ENCODE measurements at regions of chr12 and their contacts with region 1.

Region 1: DNA sequence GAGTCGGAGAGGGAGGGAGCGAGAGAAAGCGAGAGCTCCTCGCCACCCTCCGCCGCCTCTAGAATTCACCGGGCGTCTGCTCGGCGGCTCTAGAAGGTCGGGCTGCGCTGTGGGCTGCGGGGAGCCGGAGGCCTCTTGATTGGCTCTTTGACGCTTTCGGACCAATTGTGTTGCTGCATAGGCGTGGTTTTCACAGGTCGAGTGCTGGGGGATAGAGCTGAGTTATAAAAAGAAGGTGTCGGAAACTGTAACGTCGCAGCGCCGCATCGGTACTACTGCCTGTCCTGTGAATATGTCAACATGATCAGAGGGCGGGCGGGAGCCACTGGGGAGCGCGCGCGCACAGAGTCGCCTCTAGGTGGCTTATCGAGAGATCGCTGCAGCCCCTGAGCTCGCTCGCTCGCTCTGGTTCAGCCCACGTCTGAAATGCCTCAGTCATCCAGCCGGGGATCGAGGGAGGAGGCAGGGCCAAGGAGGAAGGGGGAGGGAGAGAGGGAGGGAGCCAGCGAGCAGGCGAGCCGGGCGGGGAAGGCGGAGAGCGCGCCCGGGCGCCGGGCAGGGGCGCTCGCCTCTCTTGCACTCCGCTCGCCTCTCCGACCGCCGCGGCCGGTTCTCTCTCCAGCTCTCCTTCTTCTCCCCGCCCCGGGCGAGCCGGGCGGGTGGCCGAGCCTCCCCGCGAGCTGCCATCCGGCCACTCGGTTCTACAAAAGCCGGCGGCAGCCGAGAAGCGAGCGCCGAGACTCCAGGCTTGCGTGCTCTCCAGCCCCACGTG is at the start of gene TBX3:
- DNase-seq: peak; percentile 98
- ATAC-seq: peak; percentile 92
- H3K4me3 ChIP-seq: peak within 1 kb of the TSS; percentile 81 to 97 (median 97)
- H3K27ac ChIP-seq: peak within 1 kb of the TSS; percentile 96
- H3K4me1 ChIP-seq: peaks cover 28% of the 10 kb centered on the region
- H3K27me3 ChIP-seq: no peaks in the 10 kb centered on the region; a peak in 1 of 5 replicates
- CTCF ChIP-seq: peak; percentile 91
- EP300 ChIP-seq: peak in 1 of 2 experiments; percentile 28; a peak in 2 of 4 replicates
- POLR2A ChIP-seq: peak; percentile 88 to 91
- RAD21 ChIP-seq: peak; percentile 86
- total RNA-seq, gene TBX3: 17.2 and 27.1 TPM in 2 replicates

Region 2: DNA sequence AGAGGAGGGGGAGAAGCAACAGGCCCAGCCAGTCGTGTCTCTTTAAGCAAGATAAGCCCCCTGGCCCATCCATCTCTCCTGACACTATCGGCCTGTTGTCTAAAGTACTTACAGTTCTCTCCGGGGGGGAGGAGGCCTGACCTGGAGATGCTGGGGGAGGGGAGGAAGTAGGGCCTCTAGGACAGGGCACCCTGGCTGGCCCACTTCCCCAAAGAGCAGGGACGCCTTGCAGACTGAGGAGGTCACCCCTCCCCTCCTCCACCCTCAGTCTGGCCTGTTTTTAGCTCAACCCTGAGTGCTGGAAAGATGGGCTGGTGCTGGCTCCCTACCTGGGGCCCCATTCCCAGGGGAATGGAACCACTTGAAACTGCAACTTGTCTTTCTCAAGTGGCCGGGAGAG is 348.7 kb before region 1 on chr12:
- CTCF ChIA-PET with region 1: no interaction called
- POLR2A ChIA-PET with region 1: no interaction called
- in situ Hi-C with region 1: no loop called
- intact Hi-C with region 1: no loop called
- DNase-seq: no peak
- ATAC-seq: no peak
- H3K4me3 ChIP-seq: no peak overlapping the region
- H3K27ac ChIP-seq: no peak overlapping the region
- H3K4me1 ChIP-seq: no peaks in the 10 kb centered on the region
- H3K27me3 ChIP-seq: 0 out of 5 replicates have a peak, but pooled peaks cover 0 to under 1% of the 10 kb centered on the region in 2 experiments
- CTCF ChIP-seq: no peak
- EP300 ChIP-seq: no peak
- POLR2A ChIP-seq: no peak
- RAD21 ChIP-seq: no peak

Region 3: DNA sequence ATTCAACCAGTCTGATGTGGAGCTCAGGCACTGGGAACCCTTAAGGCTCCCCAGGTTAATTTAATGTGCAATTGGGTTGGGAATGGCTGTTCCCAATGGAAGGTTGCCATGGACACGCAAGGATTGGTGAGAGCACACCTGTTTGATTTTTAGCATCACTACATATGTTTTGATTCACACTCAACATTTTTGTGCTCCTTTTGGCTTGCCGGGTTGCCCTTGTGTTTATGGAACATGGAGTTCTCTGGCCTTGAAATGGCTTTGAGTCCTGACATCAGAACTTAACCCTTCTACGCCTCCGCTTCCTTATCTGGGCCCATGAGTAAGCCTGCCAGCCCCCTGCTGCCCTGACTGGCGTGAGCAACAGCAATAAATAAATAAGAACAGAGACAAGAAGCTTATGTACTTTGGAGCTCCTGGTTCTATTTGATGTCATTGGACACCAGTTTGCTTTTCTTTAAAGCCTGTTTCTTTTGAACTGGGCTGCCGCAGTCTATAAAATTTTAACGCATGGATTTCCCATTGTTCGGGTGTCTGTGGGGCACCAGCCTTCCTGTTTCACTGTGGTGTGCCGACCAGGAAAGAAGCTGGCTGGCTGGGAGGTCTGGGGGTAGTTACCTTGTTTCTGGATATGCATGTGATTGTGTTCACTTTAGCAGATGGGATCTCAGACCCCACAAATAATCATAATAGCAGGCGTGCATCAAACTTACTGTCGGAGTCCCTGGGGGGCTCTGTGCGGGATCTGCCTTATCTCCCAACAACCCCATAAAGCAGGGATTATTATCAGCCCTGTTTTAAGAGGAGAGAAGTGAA is 28.1 kb before region 1 on chr12:
- CTCF ChIA-PET with region 1: no interaction called
- POLR2A ChIA-PET with region 1: interaction called, 21 read pairs
- in situ Hi-C with region 1: no loop called
- intact Hi-C with region 1: no loop called
- DNase-seq: peak; percentile 98
- ATAC-seq: peak; percentile 92
- H3K4me3 ChIP-seq: peak overlapping the region in 2 of 3 experiments; percentile 14 to 50; a peak in 2 of 6 replicates
- H3K27ac ChIP-seq: peak overlapping the region; percentile 97
- H3K4me1 ChIP-seq: peaks cover 63% of the 10 kb centered on the region
- H3K27me3 ChIP-seq: no peaks in the 10 kb centered on the region
- CTCF ChIP-seq: 0 out of 2 replicates have a peak, but pooled peaks have one; percentile 25
- EP300 ChIP-seq: peak; percentile 72 to 99; a peak in 3 of 4 replicates
- POLR2A ChIP-seq: peak in 1 of 2 experiments; percentile 46; a peak in 1 of 4 replicates
- RAD21 ChIP-seq: no peak

Region 4: DNA sequence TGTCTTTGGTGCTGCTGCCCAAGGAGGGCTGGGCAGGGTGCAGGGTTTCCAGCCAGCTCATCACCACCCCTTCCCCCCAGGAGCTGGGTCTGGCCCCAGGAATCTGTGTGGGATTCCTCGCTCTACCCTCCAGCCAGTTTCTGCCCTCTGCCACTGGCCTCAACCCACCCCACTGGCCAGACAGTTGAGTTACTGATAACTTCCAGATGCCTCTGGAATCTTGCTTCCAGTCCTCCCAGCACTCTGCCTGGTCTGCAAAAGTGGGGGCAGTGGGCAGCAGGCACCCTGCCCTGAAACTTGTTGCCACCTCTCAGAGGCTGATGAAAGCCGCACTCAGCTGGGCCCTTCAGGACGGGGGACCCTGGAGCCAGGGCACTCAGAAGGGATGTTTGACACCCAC is 19.8 kb after region 1 on chr12:
- CTCF ChIA-PET with region 1: no interaction called
- POLR2A ChIA-PET with region 1: interaction called, 25 read pairs
- in situ Hi-C with region 1: no loop called
- intact Hi-C with region 1: no loop called
- DNase-seq: no peak
- ATAC-seq: no peak
- H3K4me3 ChIP-seq: no peak overlapping the region
- H3K27ac ChIP-seq: no peak overlapping the region
- H3K4me1 ChIP-seq: peaks cover 21% of the 10 kb centered on the region
- H3K27me3 ChIP-seq: no peaks in the 10 kb centered on the region
- CTCF ChIP-seq: no peak
- EP300 ChIP-seq: no peak
- POLR2A ChIP-seq: no peak
- RAD21 ChIP-seq: no peak

Region 5: GRCh38 chr12:114770071-114770915 is 86.0 kb after region 1 on chr12:
- CTCF ChIA-PET with region 1: no interaction called
- POLR2A ChIA-PET with region 1: interaction called, 16 read pairs
- in situ Hi-C with region 1: no loop called
- intact Hi-C with region 1: no loop called
- DNase-seq: peak; percentile 71
- ATAC-seq: peak; percentile 88
- H3K4me3 ChIP-seq: no peak overlapping the region
- H3K27ac ChIP-seq: no peak overlapping the region
- H3K4me1 ChIP-seq: peaks cover 47% of the 10 kb centered on the region
- H3K27me3 ChIP-seq: no peaks in the 10 kb centered on the region
- CTCF ChIP-seq: peak; percentile 48
- EP300 ChIP-seq: no peak
- POLR2A ChIP-seq: no peak
- RAD21 ChIP-seq: no peak

Region 6: DNA sequence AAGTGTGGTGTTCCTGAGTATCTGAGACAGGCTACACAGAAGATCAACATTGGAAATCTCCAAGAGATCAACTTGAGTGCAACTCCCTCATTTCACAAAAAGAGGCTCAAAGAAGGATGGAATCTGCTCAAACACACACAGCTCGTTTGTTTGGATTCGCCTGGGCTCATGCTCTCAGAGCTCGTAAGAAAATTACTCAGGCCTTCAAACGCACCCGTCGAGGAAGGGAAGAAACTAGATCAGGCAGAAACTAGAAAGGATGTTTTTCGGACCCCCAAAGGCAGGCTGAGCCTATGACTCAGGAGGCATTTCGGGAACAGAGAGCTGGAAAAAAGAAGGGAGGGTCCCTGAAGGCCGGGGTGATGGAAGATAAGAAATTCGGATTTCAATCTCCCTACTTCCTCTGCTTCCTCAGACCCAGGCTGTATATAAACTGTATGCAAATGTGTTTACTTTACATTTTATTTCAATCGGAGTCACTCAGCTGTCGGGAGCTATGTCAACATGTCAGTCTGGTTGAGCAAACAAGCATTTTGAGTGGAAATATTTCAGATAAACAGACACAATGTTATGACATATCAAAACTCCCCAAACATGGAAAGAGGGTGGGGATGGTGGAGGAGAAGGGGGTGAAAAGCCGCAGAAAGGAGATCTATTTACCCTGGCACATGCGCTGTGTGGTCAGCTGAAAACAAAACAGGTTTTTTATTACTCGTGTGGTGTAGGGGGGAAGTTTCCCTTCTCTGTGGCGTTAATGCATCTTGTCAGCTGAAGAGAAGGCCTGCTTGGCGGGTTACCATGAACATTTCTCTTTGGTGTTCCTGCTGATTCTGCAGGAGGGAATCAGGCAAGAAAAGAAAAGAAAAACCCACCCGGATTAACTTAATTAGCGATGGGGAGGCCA is 128.8 kb after region 1 on chr12:
- CTCF ChIA-PET with region 1: no interaction called
- POLR2A ChIA-PET with region 1: interaction called, 12 read pairs
- in situ Hi-C with region 1: no loop called
- intact Hi-C with region 1: loop called (anchors 5 kb)
- DNase-seq: peak; percentile 75
- ATAC-seq: peak; percentile 72
- H3K4me3 ChIP-seq: peak overlapping the region; percentile 19 to 48 (median 47); a peak in 5 of 6 replicates
- H3K27ac ChIP-seq: no peak overlapping the region
- H3K4me1 ChIP-seq: peaks cover 38% of the 10 kb centered on the region
- H3K27me3 ChIP-seq: no peaks in the 10 kb centered on the region; a peak in 1 of 5 replicates
- CTCF ChIP-seq: no peak
- EP300 ChIP-seq: peak in 1 of 2 experiments; percentile 66; a peak in 2 of 4 replicates
- POLR2A ChIP-seq: no peak
- RAD21 ChIP-seq: no peak

Region 7: DNA sequence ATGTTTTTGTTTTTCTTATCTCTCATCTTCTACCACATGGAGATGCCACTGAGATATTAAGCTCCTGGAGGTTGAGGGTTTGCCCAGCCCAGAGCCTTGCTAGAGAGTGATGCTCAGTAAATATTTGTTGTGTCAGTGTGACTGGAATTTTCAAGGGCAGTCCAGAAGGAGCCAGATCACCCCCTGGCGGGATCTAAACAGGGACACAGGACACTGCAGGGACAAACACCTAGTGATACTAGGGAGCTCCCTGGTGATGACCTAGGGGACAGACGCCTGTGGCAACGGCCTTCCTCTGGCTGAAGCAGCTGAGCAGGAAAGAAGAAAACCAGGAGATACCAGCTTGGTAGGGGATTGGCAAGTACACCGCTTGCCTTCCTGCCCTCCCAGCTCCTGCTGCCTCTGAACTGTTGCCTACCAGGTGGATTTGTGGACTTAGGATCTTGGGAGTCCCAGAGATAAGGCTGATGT is 714.1 kb after region 1 on chr12:
- CTCF ChIA-PET with region 1: no interaction called
- POLR2A ChIA-PET with region 1: interaction called, 14 read pairs
- in situ Hi-C with region 1: no loop called
- intact Hi-C with region 1: loop called (anchors 1 kb)
- DNase-seq: peak; percentile 92
- ATAC-seq: peak; percentile 100
- H3K4me3 ChIP-seq: no peak overlapping the region
- H3K27ac ChIP-seq: peak overlapping the region; percentile 30
- H3K4me1 ChIP-seq: peaks cover 57% of the 10 kb centered on the region
- H3K27me3 ChIP-seq: no peaks in the 10 kb centered on the region
- CTCF ChIP-seq: peak; percentile 96
- EP300 ChIP-seq: peak in 1 of 2 experiments; percentile 62; a peak in 2 of 4 replicates
- POLR2A ChIP-seq: no peak
- RAD21 ChIP-seq: peak; percentile 97

Region 8: GRCh38 chr12:115468087-115468510 is 783.8 kb after region 1 on chr12:
- CTCF ChIA-PET with region 1: no interaction called
- POLR2A ChIA-PET with region 1: interaction called, 10 read pairs
- in situ Hi-C with region 1: no loop called
- intact Hi-C with region 1: no loop called
- DNase-seq: peak; percentile 88
- ATAC-seq: peak; percentile 100
- H3K4me3 ChIP-seq: peak overlapping the region; percentile 50 to 64 (median 54)
- H3K27ac ChIP-seq: peak overlapping the region; percentile 76
- H3K4me1 ChIP-seq: peaks cover 17% of the 10 kb centered on the region
- H3K27me3 ChIP-seq: no peaks in the 10 kb centered on the region
- CTCF ChIP-seq: peak; percentile 90
- EP300 ChIP-seq: peak in 1 of 2 experiments; percentile 30; a peak in 1 of 4 replicates
- POLR2A ChIP-seq: peak; percentile 21 to 58; a peak in 2 of 4 replicates
- RAD21 ChIP-seq: peak; percentile 82